ENCODE measurements at regions of chr12 and their contacts with region 1.

Region 1: DNA sequence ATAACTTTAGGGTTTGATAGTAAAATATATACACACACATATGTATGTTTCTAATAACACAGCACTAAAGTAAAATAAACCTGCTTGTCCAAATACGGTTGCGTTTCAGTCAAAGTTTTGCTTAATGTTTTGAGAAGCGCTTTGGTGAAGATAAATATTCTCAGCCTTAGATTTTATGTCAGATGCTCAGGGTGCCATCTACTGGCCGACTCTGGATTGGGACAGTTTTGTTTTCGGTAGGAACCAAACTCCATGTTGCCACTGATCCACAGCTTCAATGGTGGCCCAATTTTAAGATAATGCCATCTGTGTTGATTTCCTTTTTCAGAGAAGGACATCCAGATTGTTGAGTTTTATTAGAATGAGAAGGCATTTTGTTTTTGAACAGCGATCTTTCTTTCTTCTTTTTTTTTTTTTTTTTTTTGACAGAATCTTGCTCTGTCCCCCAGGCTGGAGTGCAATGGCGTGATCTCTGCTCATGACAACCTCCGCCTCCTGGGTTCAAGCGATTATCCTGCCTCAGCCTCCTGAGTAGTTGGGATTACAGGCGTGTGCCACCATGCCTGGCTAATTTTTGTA is 43.1 kb downstream of the LLPH start:
- DNase-seq: peak; percentile 13 to 34
- ATAC-seq: peak in 1 of 2 donors; percentile 77
- H3K4me3 ChIP-seq: no peak overlapping the region
- H3K27ac ChIP-seq: no peak overlapping the region
- H3K4me1 ChIP-seq: no peaks in the 10 kb centered on the region
- H3K27me3 ChIP-seq: no peaks in the 10 kb centered on the region
- CTCF ChIP-seq: peak; percentile 32 to 64 (median 53)
- POLR2A ChIP-seq: no peak

Region 2: DNA sequence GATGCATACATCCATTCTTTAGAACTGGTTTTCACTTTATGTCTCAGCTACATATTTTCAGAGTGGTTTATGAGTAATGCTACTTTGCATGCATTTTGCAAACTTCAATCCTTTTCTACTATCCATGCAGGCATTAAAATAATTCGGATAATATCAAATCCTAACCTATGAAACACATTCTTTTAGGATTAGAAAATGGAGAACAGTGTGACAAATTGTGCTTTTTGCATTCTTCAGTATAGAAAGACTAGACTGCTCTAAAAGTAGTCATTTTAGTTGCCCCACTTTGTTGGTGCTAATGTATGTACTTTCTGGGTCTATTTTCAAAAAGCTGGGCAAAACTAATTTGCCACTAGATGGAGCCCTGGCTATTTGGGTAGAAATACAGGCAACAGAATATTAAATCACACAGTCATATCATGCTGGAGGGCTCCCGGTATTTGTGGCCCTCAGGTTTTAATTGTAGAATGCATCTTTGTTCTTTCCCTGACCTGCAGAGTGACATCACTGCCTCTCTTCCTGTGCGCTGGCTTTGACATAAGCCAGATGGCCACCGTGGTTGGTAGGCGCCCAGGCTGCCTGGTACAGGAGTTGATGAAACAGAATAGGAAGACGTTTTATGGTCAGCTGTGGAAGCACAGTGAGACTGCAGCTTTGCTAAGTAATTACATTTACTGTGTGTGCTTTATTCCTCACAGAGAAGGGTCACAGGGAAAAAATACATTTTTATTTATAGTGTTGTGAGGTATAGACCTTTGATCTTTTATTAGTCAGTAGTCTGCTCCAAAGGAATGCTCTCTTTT is 780.9 kb before region 1 on chr12:
- in situ Hi-C with region 1: no loop called
- intact Hi-C with region 1: loop called (anchors 5 kb)
- DNase-seq: no peak
- ATAC-seq: no peak
- H3K4me3 ChIP-seq: no peak overlapping the region
- H3K27ac ChIP-seq: peak overlapping the region in 1 of 4 donors; percentile 4
- H3K4me1 ChIP-seq: peaks cover 15 to 24% of the 10 kb centered on the region in 2 donors
- H3K27me3 ChIP-seq: no peaks in the 10 kb centered on the region
- CTCF ChIP-seq: peak in 2 of 5 experiments; percentile 50 to 59
- POLR2A ChIP-seq: no peak

Region 3: DNA sequence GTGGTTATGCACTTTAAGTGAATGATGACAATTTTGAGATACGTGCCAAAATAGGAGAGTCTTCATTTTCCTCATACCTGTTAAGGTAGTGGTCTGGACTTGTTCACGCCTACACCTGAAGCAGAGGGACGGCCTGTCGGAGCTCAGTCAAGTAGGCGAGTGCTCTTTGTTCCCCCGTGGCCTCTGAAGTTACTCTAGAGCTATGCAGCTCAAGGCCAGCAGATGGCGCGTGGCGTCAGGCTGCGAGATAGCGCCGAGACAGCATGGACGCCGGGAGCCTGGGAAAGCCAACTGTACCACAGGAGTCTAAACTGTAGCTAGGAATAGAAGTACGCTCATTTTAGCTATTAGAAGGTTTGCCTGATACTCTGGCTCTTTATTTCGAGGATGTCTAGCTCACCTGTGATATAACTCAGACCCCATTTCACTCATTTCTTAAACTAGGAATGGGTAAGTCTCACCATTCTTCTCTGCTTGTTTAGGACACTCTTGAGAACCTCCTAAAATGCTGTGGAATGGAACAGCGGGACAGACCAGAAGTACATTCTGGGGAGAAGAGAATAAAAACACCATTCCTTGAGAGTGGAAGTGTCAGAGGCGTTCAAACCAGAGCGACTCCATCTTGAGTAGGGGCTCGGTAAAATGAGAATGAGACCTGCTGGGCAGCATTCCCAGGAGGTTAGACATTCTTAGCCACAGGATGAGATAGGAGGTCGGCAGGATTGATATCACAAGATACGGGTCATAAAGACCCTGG is 530.6 kb before region 1 on chr12:
- in situ Hi-C with region 1: loop called in 1 of 4 experiments (anchors 25 kb)
- intact Hi-C with region 1: loop called (anchors 5 kb)
- DNase-seq: peak; percentile 18 to 45
- ATAC-seq: peak; percentile 63 to 75
- H3K4me3 ChIP-seq: no peak overlapping the region
- H3K27ac ChIP-seq: no peak overlapping the region
- H3K4me1 ChIP-seq: peaks cover 0 to 3% of the 10 kb centered on the region in 2 donors
- H3K27me3 ChIP-seq: no peaks in the 10 kb centered on the region
- CTCF ChIP-seq: peak; percentile 44 to 86 (median 73)
- POLR2A ChIP-seq: no peak

Region 4: DNA sequence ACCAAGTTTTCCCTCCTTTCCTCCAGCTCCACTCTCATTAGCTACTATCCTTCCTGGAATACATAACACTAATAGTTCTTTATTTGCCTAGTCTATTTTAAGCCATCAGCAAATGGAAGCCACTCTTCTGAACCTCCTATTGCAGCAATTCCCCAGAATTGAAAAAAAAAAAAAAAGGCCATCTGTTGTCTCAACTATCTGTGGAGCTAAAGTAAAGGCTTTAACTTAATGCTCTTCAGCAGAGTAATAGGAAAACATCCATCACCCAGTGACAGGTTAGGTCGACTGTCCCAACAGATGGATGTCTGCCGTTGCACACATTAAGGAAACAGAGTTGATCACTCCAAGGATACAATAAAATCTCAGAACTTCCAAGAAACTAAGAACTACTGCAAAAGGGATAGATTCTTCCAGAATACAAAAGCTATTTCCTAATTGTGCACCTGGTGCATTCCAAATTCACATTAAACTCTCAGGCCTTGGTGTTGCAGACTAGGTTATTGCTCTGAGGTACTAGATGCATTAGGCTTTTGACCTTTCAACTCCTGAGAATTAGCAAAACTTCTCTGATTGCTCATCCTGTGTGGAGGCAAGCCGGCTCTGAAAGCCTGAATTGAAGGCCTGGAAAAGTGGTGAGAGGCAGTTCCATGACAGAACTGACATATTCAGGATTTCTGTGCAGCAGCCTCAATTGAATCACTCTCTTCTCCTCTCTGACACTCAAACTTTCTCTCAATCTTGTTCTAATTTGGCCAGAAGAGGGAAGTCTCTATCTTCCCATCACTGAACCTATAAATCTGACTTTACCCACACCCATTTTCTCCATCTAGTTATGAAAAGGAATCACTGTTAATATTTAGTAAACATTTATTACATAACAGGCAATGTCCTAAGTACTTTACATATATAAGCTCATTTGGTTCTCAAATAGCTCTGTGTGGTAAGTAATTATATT is 501.5 kb before region 1 on chr12:
- in situ Hi-C with region 1: loop called in 2 of 4 experiments (anchors 25 kb)
- intact Hi-C with region 1: no loop called
- DNase-seq: no peak
- ATAC-seq: no peak
- H3K4me3 ChIP-seq: no peak overlapping the region
- H3K27ac ChIP-seq: no peak overlapping the region
- H3K4me1 ChIP-seq: no peaks in the 10 kb centered on the region
- H3K27me3 ChIP-seq: no peaks in the 10 kb centered on the region
- CTCF ChIP-seq: no peak
- POLR2A ChIP-seq: no peak

Region 5: DNA sequence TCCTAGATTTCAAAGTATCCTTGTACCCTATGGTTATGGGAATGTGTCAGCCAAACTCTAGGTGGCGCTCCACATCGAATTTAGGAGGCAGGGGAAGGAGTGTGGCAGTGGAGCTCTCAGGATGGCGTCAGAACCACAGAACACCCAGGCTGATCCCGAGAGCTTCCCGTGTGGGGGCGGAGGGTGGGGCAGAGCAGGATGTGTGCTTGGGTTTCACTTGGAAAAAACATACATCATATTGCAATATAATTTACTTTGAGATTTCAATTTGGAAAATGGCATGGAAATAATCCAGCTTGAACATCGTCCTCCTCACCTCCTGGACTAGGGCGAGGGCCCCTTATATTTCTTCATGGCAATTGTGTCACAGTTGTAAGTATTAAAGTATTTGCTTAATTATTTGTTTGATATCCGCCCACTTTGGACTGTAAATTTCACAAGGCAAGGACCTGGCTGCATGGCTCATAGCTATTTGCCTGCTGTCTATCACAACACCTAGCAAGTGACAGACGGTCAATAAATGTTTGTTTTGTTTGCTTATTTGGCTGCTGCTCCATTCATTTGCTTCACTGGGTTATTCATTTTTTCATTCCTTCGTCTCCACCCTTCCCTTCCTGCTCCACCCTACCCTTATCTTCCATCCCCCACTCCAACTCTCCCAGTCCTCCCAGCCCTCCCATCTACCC is 484.7 kb before region 1 on chr12:
- in situ Hi-C with region 1: loop called in 3 of 4 experiments (anchors 25 kb)
- intact Hi-C with region 1: loop called (anchors 1 kb)
- DNase-seq: peak; percentile 44 to 49
- ATAC-seq: peak; percentile 83 to 85
- H3K4me3 ChIP-seq: peak overlapping the region in 3 of 4 donors; percentile 4 to 15 (median 14)
- H3K27ac ChIP-seq: peak overlapping the region in 3 of 4 donors; percentile 36 to 51 (median 50)
- H3K4me1 ChIP-seq: peaks cover 8% of the 10 kb centered on the region in 2 donors
- H3K27me3 ChIP-seq: peaks cover 0 to 2% (median 0%) of the 10 kb centered on the region in 3 donors
- CTCF ChIP-seq: peak; percentile 27 to 64 (median 53)
- POLR2A ChIP-seq: no peak

Region 6: DNA sequence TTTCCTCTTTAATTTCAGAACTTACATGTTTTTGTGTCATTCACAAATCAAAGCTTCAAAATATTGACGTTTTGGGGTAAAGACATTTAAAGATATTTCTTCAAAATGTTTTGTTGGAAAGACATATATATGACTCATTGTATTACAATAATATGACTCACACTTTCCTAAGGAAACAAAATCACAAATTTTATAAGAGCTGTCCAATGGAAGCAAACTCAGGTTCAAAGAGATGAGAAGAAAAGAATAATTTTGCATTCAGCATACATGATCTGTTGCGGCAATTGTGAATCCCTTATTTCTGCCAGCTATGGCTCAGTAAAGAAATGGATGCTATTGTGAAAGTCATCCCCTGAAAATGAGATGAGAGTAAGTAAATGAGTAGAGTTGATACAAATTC is 508.7 kb after region 1 on chr12:
- in situ Hi-C with region 1: no loop called
- intact Hi-C with region 1: no loop called
- DNase-seq: no peak
- ATAC-seq: no peak
- H3K4me3 ChIP-seq: no peak overlapping the region
- H3K27ac ChIP-seq: no peak overlapping the region
- H3K4me1 ChIP-seq: no peaks in the 10 kb centered on the region
- H3K27me3 ChIP-seq: no peaks in the 10 kb centered on the region
- CTCF ChIP-seq: no peak
- POLR2A ChIP-seq: no peak

Region 7: GRCh38 chr12:66637699-66638301 is 550.3 kb after region 1 on chr12:
- in situ Hi-C with region 1: no loop called
- intact Hi-C with region 1: no loop called
- DNase-seq: no peak
- ATAC-seq: no peak
- H3K4me3 ChIP-seq: no peak overlapping the region
- H3K27ac ChIP-seq: no peak overlapping the region
- H3K4me1 ChIP-seq: peaks cover 6 to 8% of the 10 kb centered on the region in 2 donors
- H3K27me3 ChIP-seq: no peaks in the 10 kb centered on the region
- CTCF ChIP-seq: no peak
- POLR2A ChIP-seq: no peak

Measured in gastrocnemius medialis (tissue), 4 donors.